Left cardiac atrium (tissue), 4 donors: ENCODE measurements at regions of chr18 and their contacts with region 1.

Region 1: GRCh38 chr18:8389391-8390340 is 219.6 kb upstream of the RAB12 start:
- DNase-seq: peak; percentile 64
- ATAC-seq: peak; percentile 76 to 88

Region 2: GRCh38 chr18:8036551-8036950 is 353.1 kb before region 1 on chr18:
- intact Hi-C with region 1: no loop called
- DNase-seq: no peak
- ATAC-seq: no peak

Region 3: DNA sequence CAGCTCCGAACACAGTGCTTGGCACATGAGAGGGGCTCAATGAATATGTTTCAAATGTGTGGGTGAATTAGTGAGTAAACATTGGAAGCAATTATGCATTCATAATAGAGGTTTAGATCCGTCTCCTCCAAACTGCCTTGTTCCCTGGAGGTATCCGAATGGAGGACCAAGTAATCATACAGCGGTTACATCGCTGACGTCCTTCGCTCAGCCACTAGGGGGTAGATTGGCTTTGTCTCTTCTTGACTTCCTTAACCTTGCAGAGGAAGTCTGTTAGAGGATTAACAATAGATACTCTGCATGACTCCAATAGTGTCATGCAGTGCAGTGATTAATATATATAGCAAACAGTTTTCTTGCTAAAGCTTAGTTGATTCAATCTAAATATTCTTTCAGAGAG is 305.5 kb before region 1 on chr18:
- intact Hi-C with region 1: loop called in 1 of 2 experiments (anchors 10 kb)
- DNase-seq: no peak
- ATAC-seq: peak; percentile 57 to 68